Posterior cingulate gyrus (tissue), 11 donors: ENCODE measurements at regions of chr20 and their contacts with region 1.

Region 1: GRCh38 chr20:36064658-36065426 is 89.7 kb upstream of the EPB41L1 start:
- DNase-seq: peak; percentile 89 to 99 (median 96)

Region 2: DNA sequence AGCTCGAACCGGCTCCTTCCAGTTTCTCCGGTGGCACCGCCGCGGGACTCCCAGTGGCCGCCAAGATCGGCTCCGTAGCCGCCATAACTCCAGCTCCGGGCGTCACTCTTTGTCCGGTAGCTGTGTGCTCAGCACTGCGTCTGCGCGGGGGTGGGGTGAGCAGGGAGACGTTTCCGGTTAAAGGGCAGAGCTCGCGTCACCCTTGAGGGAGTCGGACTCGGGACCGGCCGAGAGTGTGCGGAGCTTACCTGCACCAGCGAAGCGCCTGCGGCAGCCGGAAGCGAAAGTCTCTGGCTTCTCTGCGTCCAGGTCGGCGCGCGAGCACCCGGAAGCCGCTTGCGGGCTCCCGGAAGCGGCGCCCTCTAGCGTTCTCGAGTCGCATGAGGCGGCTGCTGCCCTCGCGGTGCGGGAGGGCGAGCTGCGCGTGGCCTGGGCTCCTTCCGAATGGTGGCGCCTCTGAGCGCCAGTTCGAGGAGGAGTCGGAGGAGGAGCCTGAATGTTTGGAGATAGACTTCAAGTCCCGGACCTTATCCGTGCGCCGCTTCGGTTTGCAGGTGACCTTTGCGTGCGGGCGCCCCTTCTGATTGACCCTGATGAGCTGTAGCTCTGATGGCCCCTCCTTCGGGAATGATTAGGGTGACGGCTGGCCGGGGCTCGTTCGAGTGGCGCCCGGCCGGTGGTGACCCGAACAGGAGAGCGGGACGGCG is 110.5 kb before region 1 on chr20 and contains the start of gene SCAND1:
- intact Hi-C with region 1: loop called (anchors 10 kb)
- DNase-seq: peak; percentile 86 to 99 (median 94)